Activated CD4-positive, alpha-beta T cell treated with anti-CD3 and anti-CD28 coated beads, Interleukin-2, amount 10 ng/mL, durations not matched to agents 24 days and 14 days (primary cell): ENCODE measurements at regions of chr9 and their contacts with region 1.

Region 1: DNA sequence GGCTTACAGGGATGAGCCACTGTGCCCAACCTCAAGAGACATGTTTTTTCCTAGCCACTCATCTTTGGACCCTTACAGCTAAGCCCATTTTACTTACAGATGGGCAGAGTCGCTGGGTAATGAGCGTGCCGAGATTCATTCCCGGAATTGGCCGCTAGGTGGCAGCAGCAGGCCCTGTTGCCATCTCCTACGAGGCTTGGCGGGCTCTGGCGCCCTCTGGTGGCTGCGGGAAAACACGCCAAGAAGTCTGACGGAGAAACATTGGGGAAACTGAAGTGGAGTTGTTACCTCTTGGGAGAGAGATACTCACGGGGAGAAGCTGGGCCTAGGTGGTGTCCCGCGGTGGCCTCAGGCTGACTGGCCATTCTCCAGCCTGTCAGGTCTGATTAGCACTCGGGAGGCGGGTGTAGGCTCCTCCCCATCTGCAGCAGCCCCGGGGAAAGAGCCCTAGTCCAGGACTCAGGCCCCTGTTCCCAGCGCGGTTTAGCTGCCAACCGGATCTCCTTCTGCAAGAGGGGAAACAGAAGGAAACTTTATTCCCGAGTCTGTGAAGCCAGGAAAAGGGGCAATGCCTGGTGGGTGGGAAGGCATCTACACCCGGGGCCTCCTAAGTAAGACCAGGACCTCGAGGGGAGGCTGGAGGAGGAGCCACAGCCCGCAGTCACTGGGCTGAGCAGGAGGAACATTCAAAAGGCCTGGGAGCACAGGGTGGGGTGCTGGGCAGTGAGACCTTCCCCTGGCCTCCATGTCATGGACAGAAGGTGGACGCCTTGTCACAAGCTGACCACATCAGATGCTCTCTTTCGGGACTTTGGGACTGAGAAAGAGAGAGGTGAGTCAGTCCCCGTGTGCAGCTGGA is 9.7 kb downstream of the PTGES2 start:
- DNase-seq: peak; percentile 99
- H3K4me3 Mint-ChIP-seq: no peak overlapping the region
- H3K27ac Mint-ChIP-seq: peak overlapping the region; percentile 29
- H3K4me1 Mint-ChIP-seq: peaks cover 9% of the 10 kb centered on the region
- H3K27me3 Mint-ChIP-seq: no peaks in the 10 kb centered on the region

Region 2: DNA sequence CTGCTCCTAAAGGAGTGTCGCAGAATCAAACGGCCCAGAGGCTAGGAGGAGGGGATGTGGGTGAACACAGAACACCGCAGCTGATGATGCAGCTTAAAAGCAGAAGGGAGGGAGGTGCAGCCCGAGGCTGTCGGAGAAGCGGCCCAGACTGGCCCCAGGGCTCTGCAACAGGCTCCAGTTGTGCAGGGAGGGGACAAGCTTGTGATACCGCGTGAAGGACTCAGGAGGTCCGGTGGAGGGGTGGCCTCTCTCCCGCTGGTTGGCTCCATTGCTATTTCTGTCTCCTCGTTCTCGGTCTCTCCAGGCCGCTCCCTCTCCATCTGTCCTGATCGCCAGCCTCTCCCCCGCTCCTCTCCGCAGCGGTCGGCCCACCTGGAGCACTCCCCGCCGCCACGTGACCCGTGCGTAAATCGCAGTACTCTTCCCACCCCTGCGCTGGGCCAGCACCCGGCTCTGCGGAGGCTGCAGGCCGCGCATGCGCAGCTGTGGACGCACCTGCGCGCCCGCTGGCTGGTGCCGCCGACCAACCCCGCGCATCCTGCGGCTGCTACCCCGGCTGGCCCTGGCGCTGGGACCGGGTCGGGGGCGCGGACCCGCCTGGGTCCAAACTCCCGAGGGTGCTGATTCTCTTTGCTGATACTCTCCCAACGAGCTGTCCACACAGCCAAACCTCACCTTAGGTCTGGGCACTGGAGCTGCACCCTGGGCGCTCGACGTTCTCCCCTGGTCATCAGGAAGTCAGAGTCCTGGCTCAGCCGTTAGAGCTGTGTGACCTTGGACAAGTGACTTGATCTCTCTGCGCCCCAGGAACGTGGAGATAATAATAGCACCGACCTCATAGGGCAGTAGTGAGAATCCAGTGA is 509.5 kb before region 1 on chr9:
- intact Hi-C with region 1: no loop called
- DNase-seq: peak; percentile 93
- H3K4me3 Mint-ChIP-seq: peak overlapping the region; percentile 87
- H3K27ac Mint-ChIP-seq: peak overlapping the region; percentile 69
- H3K4me1 Mint-ChIP-seq: peaks cover 22% of the 10 kb centered on the region
- H3K27me3 Mint-ChIP-seq: peaks cover 36% of the 10 kb centered on the region

Region 3: GRCh38 chr9:127854184-127854806 is 263.5 kb before region 1 on chr9 and contains the start of gene ENG:
- intact Hi-C with region 1: no loop called
- DNase-seq: peak; percentile 75
- H3K4me3 Mint-ChIP-seq: peak within 1 kb of the TSS; percentile 93
- H3K27ac Mint-ChIP-seq: peak within 1 kb of the TSS; percentile 89
- H3K4me1 Mint-ChIP-seq: peaks cover 22% of the 10 kb centered on the region
- H3K27me3 Mint-ChIP-seq: no peaks in the 10 kb centered on the region
- total RNA-seq, gene ENG: 29.9 and 32.4 TPM in 2 replicates

Region 4: DNA sequence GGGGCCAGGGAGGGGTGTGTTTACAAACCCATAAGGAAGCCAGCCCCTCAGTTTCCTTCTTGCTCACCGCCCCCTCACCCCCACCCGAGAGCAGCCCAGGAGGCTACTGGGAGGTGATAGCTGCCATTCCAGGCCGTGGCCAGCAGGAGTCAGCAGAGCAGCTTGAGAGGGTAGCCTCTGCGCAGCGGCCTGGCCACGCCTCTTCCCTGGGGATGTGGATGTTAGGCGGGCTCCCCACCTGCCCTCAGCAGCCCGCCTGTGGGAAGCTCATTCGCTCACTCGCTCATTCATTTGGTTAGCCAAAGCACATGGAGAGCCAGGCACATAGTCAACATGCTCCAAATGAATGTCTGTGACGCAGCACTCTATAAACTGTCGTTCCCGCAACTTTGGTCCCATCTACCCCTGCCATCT is 174.1 kb before region 1 on chr9:
- intact Hi-C with region 1: loop called (anchors 2 kb)
- DNase-seq: peak; percentile 93
- H3K4me3 Mint-ChIP-seq: no peak overlapping the region
- H3K27ac Mint-ChIP-seq: peak overlapping the region; percentile 80
- H3K4me1 Mint-ChIP-seq: peaks cover 17% of the 10 kb centered on the region
- H3K27me3 Mint-ChIP-seq: no peaks in the 10 kb centered on the region

Region 5: DNA sequence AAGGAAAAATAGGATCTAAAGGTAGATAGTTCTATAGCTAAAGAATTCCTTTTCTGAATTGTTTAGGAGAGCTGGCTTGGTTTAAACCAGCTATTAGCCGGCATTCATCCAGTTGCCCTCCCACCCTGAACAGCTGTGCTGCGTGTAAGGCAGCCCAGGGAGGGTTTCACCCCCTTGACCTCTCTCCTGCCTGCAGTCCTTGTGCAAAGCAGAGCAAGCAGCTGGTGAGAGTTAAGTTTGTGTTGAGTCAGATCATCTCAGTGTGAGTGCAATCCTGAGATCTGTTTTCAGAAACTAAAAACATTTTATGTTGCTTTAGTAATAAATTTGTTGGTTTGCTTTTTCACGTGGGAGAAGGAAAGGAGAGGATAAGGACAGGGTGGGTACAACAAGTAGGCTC is 36.8 kb before region 1 on chr9:
- intact Hi-C with region 1: loop called (anchors 5 kb)
- DNase-seq: no peak
- H3K4me3 Mint-ChIP-seq: no peak overlapping the region
- H3K27ac Mint-ChIP-seq: peak overlapping the region; percentile 20
- H3K4me1 Mint-ChIP-seq: peaks cover 40% of the 10 kb centered on the region
- H3K27me3 Mint-ChIP-seq: no peaks in the 10 kb centered on the region